BJ (cell line): ENCODE measurements at regions of chr1 and their contacts with region 1.

Region 1: DNA sequence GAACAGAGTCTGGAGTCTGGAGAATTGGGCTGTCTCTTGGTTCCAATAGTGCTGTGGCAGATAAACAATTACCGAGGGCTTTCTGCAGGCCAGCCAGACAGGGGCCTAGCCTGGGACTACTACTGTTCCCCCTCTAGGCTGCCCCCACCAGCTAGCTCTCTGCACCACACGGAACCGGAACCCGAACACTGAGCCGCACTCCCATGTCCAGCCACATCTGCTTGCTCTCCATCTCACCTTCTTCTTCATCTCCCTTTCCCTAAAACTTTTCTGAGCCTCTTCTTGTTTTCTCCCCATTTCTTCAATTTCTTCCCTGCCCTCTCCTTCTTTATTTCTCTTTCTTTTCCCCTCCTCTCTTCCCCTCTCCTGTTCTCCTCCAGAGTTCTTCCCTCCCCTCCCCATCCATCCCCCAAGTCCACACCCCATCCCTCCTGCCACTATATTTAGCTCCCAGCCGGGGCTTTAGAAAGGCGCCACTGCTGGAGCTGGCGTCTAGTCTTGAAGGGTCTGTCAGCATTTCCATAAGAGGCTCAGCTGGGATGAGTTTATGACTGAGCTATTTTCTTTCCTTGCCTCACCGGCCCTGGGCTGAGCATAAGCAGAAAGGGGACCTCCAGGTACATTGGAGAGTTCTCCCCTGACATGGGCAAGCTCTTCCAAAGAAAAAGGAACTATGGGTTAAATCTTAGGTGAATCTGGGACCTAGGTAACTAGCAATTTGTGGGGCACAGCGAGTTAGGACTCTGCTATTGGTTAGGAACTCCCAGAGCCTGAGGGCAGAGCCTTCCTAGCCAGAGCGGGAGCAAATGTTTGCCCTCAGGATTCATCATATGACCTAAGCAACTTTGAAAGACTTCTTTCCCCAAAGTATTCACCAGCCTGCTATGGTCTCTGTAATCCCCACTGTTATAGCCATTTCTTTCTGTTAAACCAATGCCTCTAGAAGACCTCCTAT is 25.6 kb upstream of the ATP2B4 start:
- DNase-seq: no peak
- H3K4me3 ChIP-seq: no peak overlapping the region
- H3K27me3 ChIP-seq: no peaks in the 10 kb centered on the region; the same call in 1 of the 2 replicates
- CTCF ChIP-seq: no peak

Region 2: DNA sequence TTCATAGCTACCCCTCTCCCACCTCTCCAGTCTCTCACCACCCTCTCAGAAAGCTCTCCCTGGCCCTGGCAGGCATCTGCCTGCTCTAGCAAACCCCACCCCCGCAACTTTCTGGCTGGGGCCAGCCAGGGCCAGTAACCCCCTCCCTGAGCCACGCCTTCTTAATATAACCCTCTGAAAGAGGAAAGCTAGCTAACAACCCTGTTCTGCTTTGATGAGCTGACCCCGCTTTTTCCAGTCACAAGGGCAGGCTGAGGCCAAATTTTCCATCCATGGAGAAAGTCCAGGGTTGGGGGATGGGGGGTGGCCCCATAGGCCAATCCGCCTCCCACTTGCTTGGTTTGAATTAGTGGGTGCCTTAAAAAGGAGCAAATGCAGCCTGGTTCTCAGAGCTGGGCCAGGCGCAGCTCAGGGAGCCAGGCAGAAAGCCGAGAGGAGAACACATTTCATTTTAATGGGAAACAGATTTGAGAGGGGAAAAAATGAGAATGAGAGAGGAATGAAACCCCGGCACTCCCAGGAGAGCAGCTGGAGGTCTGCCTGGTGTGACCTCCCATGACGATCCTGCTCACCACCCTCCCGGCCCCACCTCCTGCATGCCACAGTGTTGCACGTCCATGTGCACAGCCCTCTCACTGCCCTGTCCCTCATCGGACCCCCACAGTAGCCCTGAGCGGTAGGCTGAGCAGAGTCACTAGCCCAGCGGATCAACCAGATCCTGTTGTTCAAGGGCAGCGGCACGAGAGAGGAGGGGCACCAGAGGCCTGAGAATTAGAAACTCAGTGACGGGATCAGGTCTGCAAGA is 44.8 kb before region 1 on chr1:
- CTCF ChIA-PET with region 1: no interaction called
- POLR2A ChIA-PET with region 1: interaction called, 23 read pairs
- DNase-seq: peak; percentile 92
- H3K4me3 ChIP-seq: peak overlapping the region; percentile 15
- H3K27me3 ChIP-seq: no peaks in the 10 kb centered on the region
- CTCF ChIP-seq: no peak

Region 3: GRCh38 chr1:203572134-203572625 is 28.9 kb before region 1 on chr1:
- CTCF ChIA-PET with region 1: no interaction called
- POLR2A ChIA-PET with region 1: no interaction called
- DNase-seq: no peak
- H3K4me3 ChIP-seq: no peak overlapping the region
- H3K27me3 ChIP-seq: no peaks in the 10 kb centered on the region
- CTCF ChIP-seq: no peak